HEK293 (cell line): ENCODE measurements at regions of chr17 and their contacts with region 1.

Region 1: GRCh38 chr17:65100316-65101140 is 36.6 kb upstream of the RGS9 start:
- H3K4me3 ChIP-seq: peak overlapping the region; percentile 60
- H3K27ac ChIP-seq: peak overlapping the region; percentile 27; the same call in 1 of the 2 replicates
- H3K4me1 ChIP-seq: no peaks in the 10 kb centered on the region
- CTCF ChIP-seq: peak; percentile 95

Region 2: DNA sequence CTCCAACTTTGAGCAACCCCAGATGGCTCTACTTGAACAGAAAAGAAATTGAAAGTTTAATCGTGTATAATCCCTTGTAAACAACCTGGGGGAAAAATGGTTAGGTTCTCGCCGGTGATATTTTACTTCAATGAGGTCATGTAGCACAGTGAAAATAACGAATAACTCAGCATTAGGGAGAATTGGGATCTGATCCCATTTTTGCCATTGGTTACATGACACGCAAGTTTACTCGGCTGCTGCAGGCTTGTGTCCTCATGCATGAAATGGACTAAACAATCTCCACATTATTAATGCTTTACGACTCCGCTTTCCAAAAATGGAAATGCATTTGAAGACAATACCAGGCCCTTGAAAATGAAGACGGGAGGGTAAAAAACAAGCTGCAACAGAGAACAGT is 135.7 kb before region 1 on chr17:
- CTCF ChIA-PET with region 1: interaction called, 10 read pairs
- POLR2A ChIA-PET with region 1: interaction called, 4 read pairs
- H3K4me3 ChIP-seq: no peak overlapping the region
- H3K27ac ChIP-seq: no peak overlapping the region
- H3K4me1 ChIP-seq: 0 out of 2 replicates have a peak, but pooled peaks cover 2% of the 10 kb centered on the region
- CTCF ChIP-seq: no peak

Region 3: GRCh38 chr17:65064452-65065019 is 36.0 kb before region 1 on chr17:
- CTCF ChIA-PET with region 1: interaction called, 24 read pairs
- POLR2A ChIA-PET with region 1: interaction called, 3 read pairs
- H3K4me3 ChIP-seq: no peak overlapping the region
- H3K27ac ChIP-seq: peak overlapping the region; percentile 49; the same call in 1 of the 2 replicates
- H3K4me1 ChIP-seq: peaks cover 14% of the 10 kb centered on the region
- CTCF ChIP-seq: no peak

Region 4: DNA sequence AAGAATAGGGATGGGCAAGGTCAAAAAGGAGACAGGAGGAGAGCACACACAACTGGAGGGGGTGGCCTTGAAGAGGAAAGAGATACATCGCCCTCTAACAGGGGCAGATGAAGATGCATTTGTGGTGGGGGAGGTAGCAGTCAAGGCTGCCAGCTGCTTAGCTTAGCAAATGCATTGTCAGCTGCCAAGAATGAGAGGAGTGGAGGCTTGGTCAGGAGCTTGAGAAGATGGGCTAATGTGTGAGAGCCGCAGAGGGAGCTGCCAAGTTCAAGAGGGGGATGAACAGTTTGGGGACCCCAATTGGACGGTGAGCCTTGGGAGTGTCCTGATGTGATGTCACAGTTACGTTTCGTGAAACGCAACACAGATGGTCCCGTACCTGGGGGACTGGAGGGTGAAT is 15.1 kb before region 1 on chr17:
- CTCF ChIA-PET with region 1: interaction called, 36 read pairs
- POLR2A ChIA-PET with region 1: interaction called, 3 read pairs
- H3K4me3 ChIP-seq: no peak overlapping the region
- H3K27ac ChIP-seq: no peak overlapping the region
- H3K4me1 ChIP-seq: no peaks in the 10 kb centered on the region
- CTCF ChIP-seq: no peak

Region 5: GRCh38 chr17:65137021-65137991 is 36.8 kb after region 1 on chr17 and contains the start of gene RGS9:
- CTCF ChIA-PET with region 1: interaction called, 14 read pairs
- POLR2A ChIA-PET with region 1: interaction called, 4 read pairs
- H3K4me3 ChIP-seq: peak within 1 kb of the TSS; percentile 32
- H3K27ac ChIP-seq: no peak within 1 kb of the TSS
- H3K4me1 ChIP-seq: no peaks in the 10 kb centered on the region
- CTCF ChIP-seq: peak; percentile 95

Region 6: DNA sequence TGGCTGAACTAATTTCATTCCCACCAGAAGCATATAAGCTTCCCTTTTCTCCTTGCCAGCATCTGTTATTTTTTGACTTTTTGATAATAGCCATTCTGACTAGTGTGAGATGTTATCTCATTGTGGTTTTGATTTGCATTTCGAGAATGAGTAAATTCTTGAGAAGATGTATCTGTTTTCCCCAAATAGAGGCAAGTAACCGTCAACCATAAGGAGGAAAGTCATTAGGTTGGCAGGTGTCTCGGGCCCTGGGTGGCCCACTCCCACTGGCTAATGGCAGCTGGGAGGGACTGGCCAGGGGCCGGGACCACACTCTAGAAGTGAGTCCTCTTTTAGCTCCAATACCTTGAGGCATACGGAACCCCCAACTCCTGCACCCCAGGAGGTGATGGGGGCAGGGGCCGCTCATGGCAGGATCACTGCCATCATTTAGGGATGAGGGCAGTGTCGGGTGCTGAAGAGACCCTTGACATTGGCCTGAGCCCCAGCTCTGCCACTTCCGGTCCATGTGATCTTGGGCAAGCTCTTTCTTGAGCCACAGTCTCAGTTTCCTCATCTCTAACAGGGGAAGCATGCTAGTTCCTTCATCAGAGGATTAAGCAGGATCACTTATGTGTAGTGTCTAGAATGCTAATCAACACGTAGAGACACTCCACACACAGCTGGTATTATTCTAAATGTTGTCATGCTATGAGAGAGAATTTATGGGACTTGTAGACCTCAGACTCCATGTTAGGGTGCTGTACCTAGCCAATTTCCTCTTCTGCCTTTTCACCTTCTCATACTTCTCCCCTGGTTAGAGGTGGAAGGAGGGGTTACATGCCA is 80.9 kb after region 1 on chr17:
- CTCF ChIA-PET with region 1: no interaction called
- POLR2A ChIA-PET with region 1: no interaction called
- H3K4me3 ChIP-seq: no peak overlapping the region
- H3K27ac ChIP-seq: no peak overlapping the region
- H3K4me1 ChIP-seq: no peaks in the 10 kb centered on the region
- CTCF ChIP-seq: no peak